ENCODE measurements at regions of chr21 and their contacts with region 1.

Region 1: GRCh38 chr21:41612674-41613532 is 104.9 kb upstream of the TMPRSS2 start:
- DNase-seq: no peak
- ATAC-seq: peak; percentile 77
- H3K4me3 ChIP-seq: no peak overlapping the region
- H3K27ac ChIP-seq: no peak overlapping the region
- H3K4me1 ChIP-seq: no peaks in the 10 kb centered on the region
- H3K27me3 ChIP-seq: no peaks in the 10 kb centered on the region
- CTCF ChIP-seq: peak; percentile 47 to 68 (median 56)
- EP300 ChIP-seq: no peak
- POLR2A ChIP-seq: no peak
- RAD21 ChIP-seq: peak; percentile 49

Region 2: GRCh38 chr21:41673581-41674335 is 60.9 kb after region 1 on chr21:
- CTCF ChIA-PET with region 1: interaction called, 11 read pairs
- POLR2A ChIA-PET with region 1: no interaction called
- RAD21 ChIA-PET with region 1: interaction called, 5 read pairs
- SMC1A ChIA-PET with region 1: interaction called, 4 read pairs
- in situ Hi-C with region 1: no loop called
- intact Hi-C with region 1: no loop called
- DNase-seq: no peak
- ATAC-seq: no peak
- H3K4me3 ChIP-seq: no peak overlapping the region
- H3K27ac ChIP-seq: no peak overlapping the region
- H3K4me1 ChIP-seq: no peaks in the 10 kb centered on the region
- H3K27me3 ChIP-seq: no peaks in the 10 kb centered on the region; a peak in 3 of 4 replicates
- CTCF ChIP-seq: peak in 1 of 3 experiments; percentile 1; a peak in 1 of 6 replicates
- EP300 ChIP-seq: no peak
- POLR2A ChIP-seq: no peak
- RAD21 ChIP-seq: no peak

Region 3: GRCh38 chr21:41687633-41688032 is 74.7 kb after region 1 on chr21:
- CTCF ChIA-PET with region 1: no interaction called
- POLR2A ChIA-PET with region 1: no interaction called
- RAD21 ChIA-PET with region 1: no interaction called
- SMC1A ChIA-PET with region 1: no interaction called
- in situ Hi-C with region 1: no loop called
- intact Hi-C with region 1: no loop called
- DNase-seq: no peak
- ATAC-seq: no peak
- H3K4me3 ChIP-seq: no peak overlapping the region
- H3K27ac ChIP-seq: no peak overlapping the region
- H3K4me1 ChIP-seq: no peaks in the 10 kb centered on the region
- H3K27me3 ChIP-seq: no peaks in the 10 kb centered on the region
- CTCF ChIP-seq: no peak
- EP300 ChIP-seq: no peak
- POLR2A ChIP-seq: no peak
- RAD21 ChIP-seq: no peak

Region 4: GRCh38 chr21:41768437-41769061 is 155.6 kb after region 1 on chr21:
- CTCF ChIA-PET with region 1: interaction called, 21 read pairs
- POLR2A ChIA-PET with region 1: no interaction called
- RAD21 ChIA-PET with region 1: interaction called, 10 read pairs
- SMC1A ChIA-PET with region 1: interaction called, 13 read pairs
- in situ Hi-C with region 1: no loop called
- intact Hi-C with region 1: no loop called
- DNase-seq: no peak
- ATAC-seq: peak; percentile 68
- H3K4me3 ChIP-seq: peak overlapping the region; percentile 44; the same call in 1 of the 2 replicates
- H3K27ac ChIP-seq: no peak overlapping the region
- H3K4me1 ChIP-seq: no peaks in the 10 kb centered on the region
- H3K27me3 ChIP-seq: peaks cover 10 to 25% of the 10 kb centered on the region in 2 experiments
- CTCF ChIP-seq: peak in 1 of 3 experiments; percentile 13; a peak in 1 of 6 replicates
- EP300 ChIP-seq: no peak
- POLR2A ChIP-seq: no peak
- RAD21 ChIP-seq: no peak

Region 5: GRCh38 chr21:41777951-41778874 is 165.3 kb after region 1 on chr21:
- CTCF ChIA-PET with region 1: interaction called, 12 read pairs
- POLR2A ChIA-PET with region 1: no interaction called
- RAD21 ChIA-PET with region 1: interaction called, 11 read pairs
- SMC1A ChIA-PET with region 1: interaction called, 6 read pairs
- in situ Hi-C with region 1: no loop called
- intact Hi-C with region 1: no loop called
- DNase-seq: no peak
- ATAC-seq: no peak; the same call in 1 of the 3 replicates
- H3K4me3 ChIP-seq: no peak overlapping the region
- H3K27ac ChIP-seq: no peak overlapping the region
- H3K4me1 ChIP-seq: no peaks in the 10 kb centered on the region
- H3K27me3 ChIP-seq: peaks cover 0 to 3% of the 10 kb centered on the region in 2 experiments; a peak in 2 of 4 replicates
- CTCF ChIP-seq: peak; percentile 39 to 47 (median 45); a peak in 5 of 6 replicates
- EP300 ChIP-seq: no peak
- POLR2A ChIP-seq: no peak
- RAD21 ChIP-seq: peak; percentile 23; the same call in 1 of the 2 replicates

Region 6: GRCh38 chr21:41816220-41817165 is 203.6 kb after region 1 on chr21:
- CTCF ChIA-PET with region 1: interaction called, 19 read pairs
- POLR2A ChIA-PET with region 1: no interaction called
- RAD21 ChIA-PET with region 1: interaction called, 12 read pairs
- SMC1A ChIA-PET with region 1: interaction called, 16 read pairs
- in situ Hi-C with region 1: no loop called
- intact Hi-C with region 1: loop called (anchors 1 kb)
- DNase-seq: no peak
- ATAC-seq: peak; percentile 99
- H3K4me3 ChIP-seq: no peak overlapping the region
- H3K27ac ChIP-seq: no peak overlapping the region
- H3K4me1 ChIP-seq: peaks cover 5% of the 10 kb centered on the region; the same call in 1 of the 2 replicates
- H3K27me3 ChIP-seq: no peaks in the 10 kb centered on the region
- CTCF ChIP-seq: peak; percentile 84 to 93 (median 87)
- EP300 ChIP-seq: no peak
- POLR2A ChIP-seq: no peak
- RAD21 ChIP-seq: peak; percentile 88

Measured in GM12878 (cell line).